Common myeloid progenitor, CD34-positive (primary cell): ENCODE measurements at regions of chr9 and their contacts with region 1.

Region 1: DNA sequence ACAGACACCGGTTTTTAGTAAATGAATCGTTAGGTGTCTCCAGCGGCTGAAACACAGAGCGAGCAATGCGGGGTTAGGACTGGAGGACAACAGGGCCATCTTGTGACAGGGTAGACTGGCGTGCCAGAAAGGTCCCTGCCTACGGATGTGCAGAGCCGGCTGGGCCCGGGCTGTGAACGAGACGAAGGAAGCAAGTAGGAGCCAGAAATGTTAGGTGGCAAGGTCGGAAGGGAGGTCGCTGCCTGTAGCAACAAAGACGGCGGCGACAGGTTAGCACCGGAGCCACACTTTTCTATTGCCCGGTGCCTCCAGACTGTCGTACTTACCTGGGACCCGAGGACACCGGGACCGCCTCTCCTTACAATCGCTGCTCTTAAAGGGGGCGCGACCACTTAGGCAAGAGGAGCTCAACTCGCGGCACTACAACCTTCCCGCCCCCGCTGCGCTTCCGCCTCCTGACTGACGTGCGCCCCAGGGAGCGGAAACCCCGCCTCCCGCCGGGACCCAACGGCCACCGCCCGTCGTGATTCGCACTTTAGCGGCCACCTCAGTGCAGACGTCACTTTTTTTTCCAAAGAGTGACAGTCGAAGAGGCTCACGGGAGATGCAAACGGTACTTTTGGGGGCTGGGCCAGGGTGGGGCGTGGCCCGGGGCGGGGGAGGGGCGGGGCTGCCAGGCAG is at the start of gene INIP:
- DNase-seq: peak; percentile 98 to 99 (median 99)
- H3K4me3 ChIP-seq: peak within 1 kb of the TSS; percentile 72 to 94 (median 88)
- H3K27ac ChIP-seq: peak within 1 kb of the TSS; percentile 80 to 94
- H3K4me1 ChIP-seq: peaks cover 6 to 14% (median 8%) of the 10 kb centered on the region in 4 experiments
- H3K27me3 ChIP-seq: no peaks in the 10 kb centered on the region

Region 2: DNA sequence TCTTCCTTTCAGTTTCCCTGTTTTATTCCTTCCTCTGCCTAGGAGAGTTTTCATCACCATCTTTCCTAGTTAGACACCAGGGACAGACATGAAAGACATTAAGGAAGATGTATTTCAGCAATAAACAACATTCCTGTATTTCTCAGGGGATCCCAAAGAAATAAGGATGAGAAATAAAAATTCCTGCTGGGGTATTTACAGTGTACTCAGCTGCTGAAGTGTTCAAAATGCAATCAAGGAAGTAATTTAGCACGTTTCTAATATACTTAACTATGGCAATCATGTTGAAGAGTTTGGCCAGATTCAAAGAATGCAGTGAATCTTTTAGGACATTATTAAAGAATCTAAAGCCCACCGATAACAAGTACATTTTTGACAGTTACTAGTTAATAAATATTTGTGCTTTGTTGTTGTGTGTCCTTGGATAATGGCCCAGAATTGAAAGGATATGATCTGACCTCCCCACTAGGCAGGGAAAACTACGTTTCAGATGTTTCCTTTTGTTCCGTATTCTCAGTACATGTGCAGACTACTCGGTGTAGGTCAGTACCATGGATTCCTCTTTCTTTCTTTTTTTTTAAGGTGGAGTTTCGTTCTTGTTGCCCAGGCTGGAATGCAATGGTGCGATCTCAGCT is 46.7 kb before region 1 on chr9:
- CTCF ChIA-PET with region 1: no interaction called
- POLR2A ChIA-PET with region 1: no interaction called
- DNase-seq: no peak
- H3K4me3 ChIP-seq: no peak overlapping the region
- H3K27ac ChIP-seq: no peak overlapping the region
- H3K4me1 ChIP-seq: no peaks in the 10 kb centered on the region
- H3K27me3 ChIP-seq: no peaks in the 10 kb centered on the region

Region 3: DNA sequence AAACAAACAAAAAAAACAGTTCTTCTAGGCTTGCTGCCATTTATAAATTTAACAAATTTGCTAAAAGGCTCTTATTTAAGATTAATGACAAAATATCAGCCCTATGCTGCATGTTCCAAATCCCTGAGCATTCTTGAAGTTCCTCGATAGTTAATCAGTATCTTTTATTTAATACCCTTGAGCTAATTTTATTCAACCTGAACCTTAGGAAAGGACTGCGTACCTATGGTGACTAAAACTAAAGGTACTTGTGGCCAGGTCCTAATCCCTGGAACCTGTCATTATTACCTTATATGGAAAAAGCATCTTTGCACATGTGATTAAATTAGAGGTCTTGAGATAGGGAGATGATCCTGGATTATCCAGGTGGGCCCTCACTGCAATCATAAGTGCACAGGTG is 10.6 kb after region 1 on chr9:
- CTCF ChIA-PET with region 1: interaction called, 15 read pairs
- POLR2A ChIA-PET with region 1: interaction called, 4 read pairs
- DNase-seq: no peak
- H3K4me3 ChIP-seq: no peak overlapping the region
- H3K27ac ChIP-seq: no peak overlapping the region
- H3K4me1 ChIP-seq: peaks cover 0 to 3% (median 0%) of the 10 kb centered on the region in 4 experiments
- H3K27me3 ChIP-seq: no peaks in the 10 kb centered on the region